ENCODE measurements at regions of chr9 and their contacts with region 1.

Region 1: GRCh38 chr9:14314929-14315645 is 1.1 kb upstream of the NFIB start:
- DNase-seq: peak; percentile 96 to 99 (median 98)
- ATAC-seq: peak; percentile 82 to 90
- H3K4me3 ChIP-seq: peak overlapping the region; percentile 89
- H3K27ac ChIP-seq: peak overlapping the region; percentile 99
- H3K4me1 ChIP-seq: no peaks in the 10 kb centered on the region
- H3K27me3 ChIP-seq: no peaks in the 10 kb centered on the region

Region 2: DNA sequence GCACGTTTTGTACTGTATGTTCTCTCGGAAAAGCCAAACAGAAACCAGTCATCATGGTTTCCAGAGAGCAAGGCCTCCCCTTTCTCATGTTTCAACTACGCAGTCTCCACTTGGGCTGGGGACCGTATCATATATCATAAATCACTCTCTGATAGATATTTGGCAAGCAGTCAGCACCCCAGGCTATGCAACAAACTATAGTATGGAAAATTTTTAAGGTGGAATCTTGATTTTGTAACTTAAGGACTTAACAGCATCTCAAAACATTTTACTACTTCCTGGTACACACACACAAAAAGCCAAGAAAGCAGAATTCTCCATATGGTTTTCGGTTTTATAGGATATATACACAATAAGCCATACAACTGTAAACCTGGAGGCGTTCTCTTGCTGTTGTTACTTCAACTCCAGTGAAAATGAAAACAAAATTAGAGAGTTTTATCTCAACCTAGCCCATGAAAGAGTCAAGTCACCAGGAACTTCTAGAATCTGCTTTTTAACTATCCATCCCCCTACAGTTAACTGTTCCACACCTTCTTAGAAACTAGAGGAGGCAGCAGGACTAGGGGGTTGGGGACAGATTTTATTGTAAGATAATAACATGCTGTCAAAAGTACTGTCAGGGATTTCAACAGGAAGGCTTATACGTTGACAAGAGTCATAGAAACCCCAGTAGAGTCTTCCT is 284.6 kb before region 1 on chr9:
- intact Hi-C with region 1: loop called in 2 of 4 experiments (anchors 5 kb)
- DNase-seq: no peak
- ATAC-seq: peak; percentile 37 to 53
- H3K4me3 ChIP-seq: peak overlapping the region; percentile 49
- H3K27ac ChIP-seq: peak overlapping the region; percentile 90
- H3K4me1 ChIP-seq: peaks cover 10% of the 10 kb centered on the region
- H3K27me3 ChIP-seq: no peaks in the 10 kb centered on the region

Region 3: GRCh38 chr9:14096258-14096922 is 218.7 kb before region 1 on chr9:
- intact Hi-C with region 1: loop called in 3 of 4 experiments (anchors 5 to 10 kb)
- DNase-seq: peak in 2 of 3 donors; percentile 22 to 47
- ATAC-seq: peak; percentile 82 to 90
- H3K4me3 ChIP-seq: peak overlapping the region; percentile 55
- H3K27ac ChIP-seq: peak overlapping the region; percentile 77
- H3K4me1 ChIP-seq: peaks cover 5% of the 10 kb centered on the region
- H3K27me3 ChIP-seq: no peaks in the 10 kb centered on the region

Region 4: GRCh38 chr9:14158911-14159310 is 156.2 kb before region 1 on chr9:
- intact Hi-C with region 1: no loop called
- DNase-seq: no peak
- ATAC-seq: peak in 1 of 2 donors; percentile 67
- H3K4me3 ChIP-seq: no peak overlapping the region
- H3K27ac ChIP-seq: no peak overlapping the region
- H3K4me1 ChIP-seq: peaks cover 10% of the 10 kb centered on the region
- H3K27me3 ChIP-seq: no peaks in the 10 kb centered on the region

Region 5: GRCh38 chr9:14180093-14180959 is 134.8 kb before region 1 on chr9:
- intact Hi-C with region 1: loop called in 1 of 4 experiments (anchors 10 kb)
- DNase-seq: peak; percentile 42 to 86 (median 72)
- ATAC-seq: peak; percentile 73 to 75
- H3K4me3 ChIP-seq: peak overlapping the region; percentile 48
- H3K27ac ChIP-seq: peak overlapping the region; percentile 25
- H3K4me1 ChIP-seq: peaks cover 6% of the 10 kb centered on the region
- H3K27me3 ChIP-seq: no peaks in the 10 kb centered on the region

Region 6: GRCh38 chr9:14251154-14252071 is 63.7 kb before region 1 on chr9:
- intact Hi-C with region 1: loop called in 1 of 4 experiments (anchors 10 kb)
- DNase-seq: peak; percentile 87 to 93 (median 89)
- ATAC-seq: peak; percentile 93 to 94
- H3K4me3 ChIP-seq: no peak overlapping the region
- H3K27ac ChIP-seq: peak overlapping the region; percentile 86
- H3K4me1 ChIP-seq: peaks cover 11% of the 10 kb centered on the region
- H3K27me3 ChIP-seq: no peaks in the 10 kb centered on the region

Region 7: GRCh38 chr9:14271093-14271673 is 43.9 kb before region 1 on chr9:
- intact Hi-C with region 1: loop called in 1 of 4 experiments (anchors 5 kb)
- DNase-seq: peak; percentile 68 to 85 (median 85)
- ATAC-seq: peak; percentile 59 to 75
- H3K4me3 ChIP-seq: no peak overlapping the region
- H3K27ac ChIP-seq: no peak overlapping the region
- H3K4me1 ChIP-seq: peaks cover 13% of the 10 kb centered on the region
- H3K27me3 ChIP-seq: no peaks in the 10 kb centered on the region

Region 8: DNA sequence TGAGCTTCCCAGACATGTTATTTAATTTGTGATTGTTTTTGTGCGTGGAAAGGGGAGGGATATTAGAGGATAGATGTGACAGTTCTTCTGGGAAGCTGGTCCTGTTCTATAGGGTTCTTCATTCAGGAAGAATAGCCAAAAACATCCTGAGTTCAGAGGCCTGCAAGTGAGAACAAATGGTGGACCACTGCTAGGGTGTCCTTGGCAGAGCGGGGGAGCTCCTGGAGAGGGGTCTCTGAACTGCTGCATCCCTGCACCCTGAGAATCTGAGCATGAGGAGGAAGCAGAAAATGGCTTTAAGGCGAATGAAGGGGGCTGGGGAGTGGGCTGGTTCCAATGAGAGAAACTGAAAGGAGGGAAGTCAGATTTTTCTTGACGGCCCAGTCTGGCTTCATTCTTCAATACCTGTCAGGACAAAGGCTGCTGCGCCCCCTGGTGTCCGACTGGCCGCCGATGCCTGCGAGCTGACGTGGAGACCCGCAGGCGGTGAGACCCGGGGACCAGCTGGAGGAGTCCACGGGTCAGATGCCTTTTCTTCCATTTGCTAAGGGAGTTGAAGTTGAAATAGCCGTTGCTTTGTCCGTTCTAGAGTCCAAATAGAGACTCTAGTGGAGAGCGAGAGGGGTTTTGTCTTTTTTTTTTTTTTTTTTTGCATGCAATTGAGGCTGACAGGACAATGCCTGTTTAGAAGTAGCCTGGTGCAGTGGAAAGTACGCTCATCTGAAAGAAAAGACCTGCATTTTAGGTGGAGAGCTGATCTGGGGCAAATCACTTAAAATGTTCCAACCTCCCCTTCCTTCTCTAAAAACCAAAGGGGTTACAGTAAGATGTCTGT is 38.4 kb after region 1 on chr9:
- intact Hi-C with region 1: loop called in 1 of 4 experiments (anchors 5 kb)
- DNase-seq: peak; percentile 93 to 99 (median 98)
- ATAC-seq: peak; percentile 74 to 80
- H3K4me3 ChIP-seq: no peak overlapping the region
- H3K27ac ChIP-seq: peak overlapping the region; percentile 58
- H3K4me1 ChIP-seq: peaks cover 9% of the 10 kb centered on the region
- H3K27me3 ChIP-seq: no peaks in the 10 kb centered on the region

Region 9: GRCh38 chr9:14383294-14383693 is 68.2 kb after region 1 on chr9:
- intact Hi-C with region 1: no loop called
- DNase-seq: peak in 2 of 3 donors; percentile 17 to 54
- ATAC-seq: peak in 1 of 2 donors; percentile 63
- H3K4me3 ChIP-seq: no peak overlapping the region
- H3K27ac ChIP-seq: no peak overlapping the region
- H3K4me1 ChIP-seq: no peaks in the 10 kb centered on the region
- H3K27me3 ChIP-seq: no peaks in the 10 kb centered on the region

Region 10: DNA sequence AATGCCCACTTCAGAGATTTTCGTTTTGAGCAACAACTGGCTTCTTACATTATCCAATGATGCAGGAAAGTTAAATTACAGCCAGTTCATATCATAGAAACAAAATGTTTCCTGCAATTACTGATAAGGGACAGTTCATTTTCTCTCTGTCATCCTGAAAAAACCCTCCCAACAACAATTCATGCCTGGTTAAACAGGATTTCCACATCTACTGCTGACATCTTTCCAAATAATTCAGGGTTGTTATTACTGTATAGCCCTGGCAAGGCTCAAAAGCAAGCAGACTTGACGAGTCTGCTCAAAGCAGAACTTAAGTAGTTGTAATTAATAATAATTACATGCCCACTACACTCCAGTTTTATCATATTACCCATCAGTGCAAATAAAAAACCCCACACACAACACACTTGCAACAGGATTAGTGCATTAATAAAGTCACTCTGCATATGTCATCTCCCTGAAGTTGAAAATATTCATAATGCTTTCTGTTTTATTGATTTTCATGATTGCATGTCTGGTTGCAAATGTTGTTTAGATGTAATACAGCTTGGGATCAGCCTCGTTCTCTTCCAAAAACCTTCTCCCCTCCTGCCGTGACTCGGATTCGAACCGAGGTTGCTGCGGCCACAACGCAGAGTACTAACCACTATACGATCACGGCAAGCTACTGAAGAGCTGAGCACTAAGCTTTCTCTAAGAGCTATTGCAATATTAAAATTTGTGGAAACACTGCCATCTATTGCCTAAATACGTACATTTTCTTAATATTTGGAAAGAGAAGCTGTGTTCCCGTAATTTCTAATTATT is 118.5 kb after region 1 on chr9:
- intact Hi-C with region 1: no loop called
- DNase-seq: peak; percentile 28 to 64 (median 63)
- ATAC-seq: peak; percentile 72 to 76
- H3K4me3 ChIP-seq: no peak overlapping the region
- H3K27ac ChIP-seq: no peak overlapping the region
- H3K4me1 ChIP-seq: no peaks in the 10 kb centered on the region
- H3K27me3 ChIP-seq: no peaks in the 10 kb centered on the region

Region 11: DNA sequence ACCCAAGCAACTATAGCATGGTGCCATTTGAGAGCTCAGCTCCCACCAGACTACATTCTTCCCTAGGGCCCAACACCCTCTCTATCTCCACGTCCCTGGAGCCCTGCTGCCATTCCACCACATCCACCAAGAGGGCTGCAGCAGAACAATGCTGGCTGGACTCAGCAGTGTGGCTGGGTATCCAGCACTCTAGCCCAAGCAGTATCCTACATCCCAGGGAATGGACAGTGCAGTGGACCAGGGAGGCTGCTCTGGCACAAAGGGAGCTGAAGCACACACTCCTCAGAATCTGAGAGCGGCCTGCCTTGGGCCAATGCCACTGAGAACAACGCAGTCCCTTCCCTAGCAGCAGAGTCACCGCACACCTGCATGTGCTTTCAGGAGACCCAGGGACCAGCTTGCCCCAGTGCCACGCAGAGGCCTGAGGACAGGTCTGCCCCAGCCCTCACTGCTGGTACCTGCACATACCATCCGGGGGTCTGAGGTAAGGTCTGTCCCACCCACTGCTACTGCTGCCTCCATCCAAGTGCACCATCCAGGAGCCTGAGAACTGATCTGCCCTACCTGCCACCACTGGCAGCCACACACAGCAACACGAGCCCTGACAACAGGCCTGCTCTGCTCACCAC is 282.2 kb after region 1 on chr9:
- intact Hi-C with region 1: no loop called
- DNase-seq: peak in 1 of 3 donors; percentile 31
- ATAC-seq: no peak
- H3K4me3 ChIP-seq: no peak overlapping the region
- H3K27ac ChIP-seq: no peak overlapping the region
- H3K4me1 ChIP-seq: no peaks in the 10 kb centered on the region
- H3K27me3 ChIP-seq: no peaks in the 10 kb centered on the region